PC-3 (cell line): ENCODE measurements at regions of chr2 and their contacts with region 1.

Region 1: GRCh38 chr2:191410646-191411436 is 165.6 kb downstream of the MYO1B start:
- DNase-seq: peak; percentile 14
- ATAC-seq: peak; percentile 78
- H3K4me3 ChIP-seq: no peak overlapping the region
- H3K27ac ChIP-seq: peak overlapping the region; percentile 53
- H3K4me1 ChIP-seq: peaks cover 10% of the 10 kb centered on the region
- H3K27me3 ChIP-seq: no peaks in the 10 kb centered on the region
- CTCF ChIP-seq: no peak

Region 2: GRCh38 chr2:191171708-191172355 is 239.0 kb before region 1 on chr2:
- CTCF ChIA-PET with region 1: no interaction called
- POLR2A ChIA-PET with region 1: no interaction called
- intact Hi-C with region 1: loop called (anchors 1 kb)
- DNase-seq: peak; percentile 97
- ATAC-seq: peak; percentile 70
- H3K4me3 ChIP-seq: peak overlapping the region; percentile 30; the same call in 1 of the 2 replicates
- H3K27ac ChIP-seq: peak overlapping the region; percentile 90
- H3K4me1 ChIP-seq: peaks cover 74% of the 10 kb centered on the region
- H3K27me3 ChIP-seq: no peaks in the 10 kb centered on the region
- CTCF ChIP-seq: no peak

Region 3: DNA sequence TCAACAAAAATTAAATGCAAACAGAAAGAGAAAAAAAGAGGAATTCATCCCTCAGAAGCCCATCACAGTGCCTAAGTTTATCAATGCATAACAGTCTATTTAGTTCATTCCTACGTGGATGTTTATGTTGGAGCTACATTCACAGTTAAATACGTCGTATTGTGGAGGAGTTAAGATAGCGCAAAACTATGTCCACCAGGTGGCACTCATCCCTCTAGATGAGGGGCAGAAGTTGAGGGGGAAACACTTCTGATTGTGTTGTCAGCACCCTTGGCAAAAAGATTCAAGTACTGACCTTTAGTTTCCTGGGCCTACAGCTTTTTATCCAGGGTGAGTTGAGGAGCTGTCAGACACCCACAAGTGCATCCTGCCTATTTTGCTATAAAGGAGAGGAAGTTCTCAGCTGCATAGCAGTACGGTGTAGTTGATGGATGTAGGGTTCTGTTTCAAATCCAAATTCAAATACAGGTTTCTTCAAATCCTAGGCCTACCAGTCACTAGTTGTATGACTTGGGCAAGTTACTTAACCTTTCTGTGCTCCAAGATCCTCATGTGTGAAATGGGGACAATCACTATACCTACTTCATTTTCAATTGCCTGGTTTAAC is 192.4 kb before region 1 on chr2:
- CTCF ChIA-PET with region 1: no interaction called
- POLR2A ChIA-PET with region 1: no interaction called
- intact Hi-C with region 1: loop called (anchors 1 kb)
- DNase-seq: peak; percentile 85
- ATAC-seq: peak; percentile 17; the same call in 1 of the 2 replicates
- H3K4me3 ChIP-seq: peak overlapping the region; percentile 15; the same call in 1 of the 2 replicates
- H3K27ac ChIP-seq: peak overlapping the region; percentile 84
- H3K4me1 ChIP-seq: peaks cover 49% of the 10 kb centered on the region
- H3K27me3 ChIP-seq: no peaks in the 10 kb centered on the region
- CTCF ChIP-seq: peak; percentile 88

Region 4: DNA sequence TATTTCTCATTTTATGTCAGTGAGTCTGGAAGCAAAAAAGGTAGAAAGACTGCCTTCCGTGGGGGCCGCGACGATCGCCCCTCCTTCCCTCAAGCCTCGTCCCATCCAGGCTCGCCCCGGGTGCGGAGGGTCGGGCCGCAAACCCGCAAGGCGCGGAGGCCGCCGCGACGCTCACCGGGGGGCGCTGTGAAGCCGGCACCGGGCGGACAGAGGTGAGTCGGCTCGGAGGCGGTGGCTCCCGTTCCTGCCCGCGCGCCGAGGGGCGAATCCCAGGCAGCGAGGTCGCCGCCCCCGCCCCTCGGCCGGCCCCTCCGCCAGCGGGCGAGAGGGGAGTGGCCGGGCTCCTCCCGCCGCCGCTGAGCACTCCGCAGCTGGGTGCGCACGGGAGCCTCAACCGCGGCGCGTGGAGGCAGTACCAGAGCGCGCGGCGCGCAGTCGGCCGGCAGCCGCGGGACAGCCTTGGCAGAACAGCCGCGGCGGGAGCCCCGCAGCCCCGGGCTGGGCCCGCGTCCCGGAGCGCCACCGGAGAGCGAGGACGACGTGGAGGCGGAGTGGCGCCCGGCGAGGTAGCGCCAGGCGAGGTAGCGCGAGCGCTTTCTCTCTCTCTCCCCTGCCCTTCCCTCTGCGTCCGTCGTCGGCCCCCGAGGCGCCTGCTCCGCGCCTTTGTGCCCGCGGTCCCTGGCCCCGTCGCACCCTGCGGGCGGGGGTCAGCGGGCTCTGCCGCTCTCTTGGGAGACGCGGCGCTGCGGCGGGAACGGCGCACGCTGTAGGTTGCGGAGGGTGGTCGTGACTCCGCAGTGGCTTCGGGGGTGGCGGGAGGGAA is 165.6 kb before region 1 on chr2 and contains the start of gene MYO1B:
- CTCF ChIA-PET with region 1: no interaction called
- POLR2A ChIA-PET with region 1: no interaction called
- intact Hi-C with region 1: no loop called
- DNase-seq: peak; percentile 88
- ATAC-seq: peak; percentile 75
- H3K4me3 ChIP-seq: peak within 1 kb of the TSS; percentile 90
- H3K27ac ChIP-seq: peak within 1 kb of the TSS; percentile 39
- H3K4me1 ChIP-seq: peaks cover 43% of the 10 kb centered on the region
- H3K27me3 ChIP-seq: no peaks in the 10 kb centered on the region
- CTCF ChIP-seq: peak; percentile 70
- total RNA-seq, gene MYO1B: 88.0 and 93.0 TPM in 2 replicates

Region 5: GRCh38 chr2:191486584-191487320 is 75.9 kb after region 1 on chr2:
- CTCF ChIA-PET with region 1: no interaction called
- POLR2A ChIA-PET with region 1: no interaction called
- intact Hi-C with region 1: loop called (anchors 5 kb)
- DNase-seq: peak; percentile 90
- ATAC-seq: peak; percentile 99
- H3K4me3 ChIP-seq: no peak overlapping the region
- H3K27ac ChIP-seq: peak overlapping the region; percentile 8
- H3K4me1 ChIP-seq: peaks cover 12% of the 10 kb centered on the region
- H3K27me3 ChIP-seq: no peaks in the 10 kb centered on the region
- CTCF ChIP-seq: no peak